GM12878 (cell line): ENCODE measurements at regions of chr6 and their contacts with region 1.

Region 1: GRCh38 chr6:11496152-11497060 is 41.1 kb upstream of the TMEM170B start:
- DNase-seq: peak; percentile 84
- ATAC-seq: peak; percentile 77
- H3K4me3 ChIP-seq: no peak overlapping the region
- H3K27ac ChIP-seq: peak overlapping the region; percentile 68
- H3K4me1 ChIP-seq: peaks cover 56% of the 10 kb centered on the region
- H3K27me3 ChIP-seq: no peaks in the 10 kb centered on the region
- CTCF ChIP-seq: peak; percentile 76 to 96 (median 88)
- EP300 ChIP-seq: no peak
- POLR2A ChIP-seq: no peak
- RAD21 ChIP-seq: peak; percentile 99

Region 2: DNA sequence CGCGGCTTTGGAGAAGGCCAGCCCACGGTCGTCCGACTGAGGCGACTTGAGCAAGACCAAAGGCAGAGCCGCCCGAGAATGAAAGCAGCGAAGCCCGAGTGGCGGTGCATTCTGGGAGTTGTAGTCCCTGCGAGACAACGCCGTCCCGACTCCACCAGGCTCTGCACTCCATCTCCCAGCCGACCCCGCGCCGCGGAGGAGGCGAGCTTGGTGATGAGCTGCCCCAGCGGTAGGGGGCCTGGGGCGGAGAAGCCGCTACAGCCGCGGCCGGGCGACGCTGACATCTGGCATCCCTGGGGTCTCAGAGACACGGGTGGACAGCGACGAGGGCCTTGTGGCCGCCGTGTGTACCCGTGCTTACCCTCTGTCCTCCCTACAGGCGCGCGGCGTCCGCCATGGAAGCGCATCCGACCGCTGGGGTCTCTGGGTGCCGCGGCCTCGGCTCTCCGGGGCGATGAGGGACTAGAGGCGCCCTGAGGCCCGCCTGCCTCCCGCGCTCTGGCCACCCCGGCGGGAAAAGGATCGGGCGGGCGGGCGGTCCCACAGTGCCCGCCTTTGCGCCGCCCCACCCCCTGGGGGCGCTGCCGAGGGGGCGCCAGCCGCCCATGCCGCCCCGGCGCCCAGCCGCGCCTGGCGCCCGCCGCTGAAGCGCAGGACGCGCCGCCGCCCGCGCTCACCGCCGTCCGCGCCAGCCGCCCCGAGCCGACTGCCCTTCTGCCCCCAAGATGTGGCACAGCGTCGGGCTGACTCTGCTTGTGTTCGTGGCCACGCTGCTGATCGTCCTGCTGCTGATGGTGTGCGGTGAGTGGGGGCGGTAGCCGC is 402.6 kb before region 1 on chr6 and contains the start of gene SMIM13:
- CTCF ChIA-PET with region 1: interaction called, 13 read pairs
- POLR2A ChIA-PET with region 1: no interaction called
- RAD21 ChIA-PET with region 1: interaction called, 16 read pairs
- SMC1A ChIA-PET with region 1: interaction called, 13 read pairs
- in situ Hi-C with region 1: no loop called
- intact Hi-C with region 1: no loop called
- DNase-seq: peak; percentile 89
- ATAC-seq: peak; percentile 94
- H3K4me3 ChIP-seq: peak within 1 kb of the TSS; percentile 81
- H3K27ac ChIP-seq: peak within 1 kb of the TSS; percentile 96
- H3K4me1 ChIP-seq: no peaks in the 10 kb centered on the region; the same call in 1 of the 2 replicates
- H3K27me3 ChIP-seq: no peaks in the 10 kb centered on the region
- CTCF ChIP-seq: peak; percentile 42 to 59 (median 51); a peak in 4 of 6 replicates
- EP300 ChIP-seq: 0 out of 4 replicates have a peak, but pooled peaks of 1 of the 2 experiments have one; percentile 23
- POLR2A ChIP-seq: peak; percentile 94
- RAD21 ChIP-seq: no peak
- polyA plus RNA-seq, gene SMIM13: 2.0 to 3.2 TPM

Region 3: GRCh38 chr6:11172501-11173332 is 323.7 kb before region 1 on chr6:
- CTCF ChIA-PET with region 1: interaction called, 97 read pairs
- POLR2A ChIA-PET with region 1: no interaction called
- RAD21 ChIA-PET with region 1: interaction called, 78 read pairs
- SMC1A ChIA-PET with region 1: interaction called, 135 read pairs
- in situ Hi-C with region 1: loop called (anchors 10 kb)
- intact Hi-C with region 1: loop called (anchors 1 kb)
- DNase-seq: no peak
- ATAC-seq: peak; percentile 89
- H3K4me3 ChIP-seq: no peak overlapping the region
- H3K27ac ChIP-seq: no peak overlapping the region
- H3K4me1 ChIP-seq: no peaks in the 10 kb centered on the region
- H3K27me3 ChIP-seq: no peaks in the 10 kb centered on the region
- CTCF ChIP-seq: peak; percentile 81 to 88 (median 81)
- EP300 ChIP-seq: no peak
- POLR2A ChIP-seq: no peak
- RAD21 ChIP-seq: peak; percentile 83

Region 4: GRCh38 chr6:11324453-11325015 is 171.9 kb before region 1 on chr6:
- CTCF ChIA-PET with region 1: interaction called, 24 read pairs
- POLR2A ChIA-PET with region 1: interaction called, 3 read pairs
- RAD21 ChIA-PET with region 1: interaction called, 66 read pairs
- SMC1A ChIA-PET with region 1: interaction called, 65 read pairs
- in situ Hi-C with region 1: no loop called
- intact Hi-C with region 1: loop called (anchors 1 kb)
- DNase-seq: peak; percentile 61
- ATAC-seq: peak; percentile 71
- H3K4me3 ChIP-seq: no peak overlapping the region
- H3K27ac ChIP-seq: peak overlapping the region; percentile 45
- H3K4me1 ChIP-seq: peaks cover 41% of the 10 kb centered on the region
- H3K27me3 ChIP-seq: no peaks in the 10 kb centered on the region
- CTCF ChIP-seq: no peak
- EP300 ChIP-seq: peak; percentile 57 to 76; a peak in 2 of 4 replicates
- POLR2A ChIP-seq: no peak
- RAD21 ChIP-seq: 0 out of 2 replicates have a peak, but pooled peaks have one; percentile 13

Region 5: GRCh38 chr6:11414176-11414963 is 82.0 kb before region 1 on chr6:
- CTCF ChIA-PET with region 1: interaction called, 24 read pairs
- POLR2A ChIA-PET with region 1: interaction called, 4 read pairs
- RAD21 ChIA-PET with region 1: interaction called, 46 read pairs
- SMC1A ChIA-PET with region 1: interaction called, 32 read pairs
- in situ Hi-C with region 1: no loop called
- intact Hi-C with region 1: no loop called
- DNase-seq: peak; percentile 72
- ATAC-seq: peak; percentile 79
- H3K4me3 ChIP-seq: no peak overlapping the region
- H3K27ac ChIP-seq: 0 out of 2 replicates have a peak overlapping the region, but pooled peaks have one; percentile 4
- H3K4me1 ChIP-seq: peaks cover 30% of the 10 kb centered on the region
- H3K27me3 ChIP-seq: no peaks in the 10 kb centered on the region
- CTCF ChIP-seq: no peak
- EP300 ChIP-seq: no peak
- POLR2A ChIP-seq: no peak
- RAD21 ChIP-seq: no peak

Region 6: DNA sequence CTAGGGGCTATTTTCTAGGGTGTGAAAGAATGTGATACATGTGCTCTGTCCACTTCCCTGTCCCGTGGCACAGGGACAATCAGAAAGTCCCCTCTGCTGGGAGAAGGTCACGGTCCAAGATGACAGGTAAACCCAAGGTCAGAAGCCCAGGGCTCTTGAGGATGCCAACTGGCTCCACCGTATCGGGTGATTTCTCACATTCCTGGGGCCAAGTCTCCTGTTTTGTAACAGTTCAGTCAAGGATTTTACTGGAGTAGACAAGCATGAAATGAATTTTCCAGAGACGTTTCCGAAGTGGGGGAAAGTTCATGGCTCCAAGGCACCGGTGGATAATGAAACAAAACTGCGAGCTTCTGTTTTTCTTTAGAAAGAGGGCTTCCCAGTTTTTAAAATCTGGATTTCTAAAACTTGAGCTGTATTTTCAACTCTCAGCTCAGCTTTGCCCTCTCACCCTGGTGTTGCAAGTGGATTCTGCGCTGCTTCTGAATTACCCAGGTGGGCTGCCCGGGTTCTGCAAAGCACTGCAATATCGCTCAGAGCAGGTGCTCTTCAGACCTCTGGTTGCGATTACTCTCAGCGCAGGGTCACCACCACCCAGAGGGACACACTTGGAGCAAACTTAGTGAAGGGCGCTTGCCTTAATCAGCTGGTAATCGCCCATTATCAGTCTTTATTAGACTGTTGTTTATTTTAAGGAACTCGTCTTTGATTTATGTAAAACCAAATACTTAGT is 23.2 kb before region 1 on chr6:
- CTCF ChIA-PET with region 1: interaction called, 6 read pairs
- POLR2A ChIA-PET with region 1: interaction called, 4 read pairs
- RAD21 ChIA-PET with region 1: interaction called, 21 read pairs
- SMC1A ChIA-PET with region 1: interaction called, 26 read pairs
- in situ Hi-C with region 1: no loop called
- intact Hi-C with region 1: no loop called
- DNase-seq: no peak
- ATAC-seq: no peak
- H3K4me3 ChIP-seq: no peak overlapping the region
- H3K27ac ChIP-seq: no peak overlapping the region
- H3K4me1 ChIP-seq: peaks cover 17% of the 10 kb centered on the region
- H3K27me3 ChIP-seq: no peaks in the 10 kb centered on the region
- CTCF ChIP-seq: no peak
- EP300 ChIP-seq: no peak
- POLR2A ChIP-seq: no peak
- RAD21 ChIP-seq: no peak

Region 7: DNA sequence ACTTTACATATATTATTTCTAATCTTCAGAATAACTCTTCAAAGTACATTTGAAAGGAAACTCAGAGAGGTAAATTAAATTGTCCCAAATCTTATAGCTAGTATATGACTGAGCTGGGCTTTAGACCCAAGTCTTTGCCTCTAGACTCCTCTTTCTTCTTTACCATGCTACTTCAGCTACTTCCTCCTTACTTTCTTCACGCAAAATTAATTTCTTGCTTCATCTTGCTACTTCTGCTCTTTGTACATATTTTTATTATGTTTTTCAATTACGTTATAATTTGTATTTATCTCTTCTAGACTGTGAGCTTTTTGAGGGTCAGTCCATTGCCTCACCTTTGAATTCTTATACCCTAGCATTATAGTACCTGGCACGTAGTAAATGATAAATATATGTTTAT is 46.5 kb after region 1 on chr6:
- CTCF ChIA-PET with region 1: interaction called, 25 read pairs
- POLR2A ChIA-PET with region 1: interaction called, 3 read pairs
- RAD21 ChIA-PET with region 1: interaction called, 16 read pairs
- SMC1A ChIA-PET with region 1: interaction called, 21 read pairs
- in situ Hi-C with region 1: no loop called
- intact Hi-C with region 1: no loop called
- DNase-seq: no peak
- ATAC-seq: no peak
- H3K4me3 ChIP-seq: no peak overlapping the region
- H3K27ac ChIP-seq: no peak overlapping the region
- H3K4me1 ChIP-seq: no peaks in the 10 kb centered on the region
- H3K27me3 ChIP-seq: no peaks in the 10 kb centered on the region
- CTCF ChIP-seq: no peak
- EP300 ChIP-seq: no peak
- POLR2A ChIP-seq: no peak
- RAD21 ChIP-seq: no peak